PC-9 (cell line): ENCODE measurements at regions of chr16 and their contacts with region 1.

Region 1: GRCh38 chr16:18789850-18790724 is at the start of gene RPS15A:
- DNase-seq: peak; percentile 94 to 97
- H3K4me3 ChIP-seq: peak within 1 kb of the TSS; percentile 90
- H3K27ac ChIP-seq: peak within 1 kb of the TSS; percentile 81
- H3K4me1 ChIP-seq: peaks cover 42% of the 10 kb centered on the region
- H3K27me3 ChIP-seq: no peaks in the 10 kb centered on the region
- CTCF ChIP-seq: no peak
- total RNA-seq, gene RPS15A: 1,449 and 1,977 TPM in 2 replicates

Region 2: GRCh38 chr16:18801197-18801972 is 11.3 kb after region 1 on chr16 and contains the start of gene ARL6IP1:
- CTCF ChIA-PET with region 1: interaction called, 10 read pairs
- POLR2A ChIA-PET with region 1: interaction called, 25 read pairs
- intact Hi-C with region 1: loop called (anchors 1 kb)
- DNase-seq: peak; percentile 98 to 99
- H3K4me3 ChIP-seq: peak within 1 kb of the TSS; percentile 98
- H3K27ac ChIP-seq: peak within 1 kb of the TSS; percentile 85
- H3K4me1 ChIP-seq: peaks cover 48% of the 10 kb centered on the region
- H3K27me3 ChIP-seq: no peaks in the 10 kb centered on the region
- CTCF ChIP-seq: peak; percentile 91
- total RNA-seq, gene ARL6IP1: 294 and 338 TPM in 2 replicates

Region 3: GRCh38 chr16:18816286-18816685 is 26.2 kb after region 1 on chr16:
- CTCF ChIA-PET with region 1: no interaction called
- POLR2A ChIA-PET with region 1: no interaction called
- intact Hi-C with region 1: no loop called
- DNase-seq: no peak
- H3K4me3 ChIP-seq: no peak overlapping the region
- H3K27ac ChIP-seq: no peak overlapping the region
- H3K4me1 ChIP-seq: no peaks in the 10 kb centered on the region
- H3K27me3 ChIP-seq: no peaks in the 10 kb centered on the region
- CTCF ChIP-seq: no peak